ENCODE measurements at regions of chr14 and their contacts with region 1.

Region 1: GRCh38 chr14:100067971-100068959 is 3.0 kb downstream of the EVL start:
- DNase-seq: peak; percentile 95
- ATAC-seq: peak; percentile 67
- H3K4me3 Mint-ChIP-seq: peak overlapping the region; percentile 91
- H3K27ac Mint-ChIP-seq: peak overlapping the region; percentile 97
- H3K4me1 Mint-ChIP-seq: peaks cover 36% of the 10 kb centered on the region
- H3K27me3 Mint-ChIP-seq: no peaks in the 10 kb centered on the region

Region 2: GRCh38 chr14:100049220-100049619 is 19.0 kb before region 1 on chr14:
- CTCF ChIA-PET with region 1: interaction called, 160 read pairs
- POLR2A ChIA-PET with region 1: interaction called, 22 read pairs
- DNase-seq: no peak
- ATAC-seq: peak; percentile 28
- H3K4me3 Mint-ChIP-seq: no peak overlapping the region
- H3K27ac Mint-ChIP-seq: peak overlapping the region; percentile 1
- H3K4me1 Mint-ChIP-seq: peaks cover 34% of the 10 kb centered on the region
- H3K27me3 Mint-ChIP-seq: no peaks in the 10 kb centered on the region

Region 3: DNA sequence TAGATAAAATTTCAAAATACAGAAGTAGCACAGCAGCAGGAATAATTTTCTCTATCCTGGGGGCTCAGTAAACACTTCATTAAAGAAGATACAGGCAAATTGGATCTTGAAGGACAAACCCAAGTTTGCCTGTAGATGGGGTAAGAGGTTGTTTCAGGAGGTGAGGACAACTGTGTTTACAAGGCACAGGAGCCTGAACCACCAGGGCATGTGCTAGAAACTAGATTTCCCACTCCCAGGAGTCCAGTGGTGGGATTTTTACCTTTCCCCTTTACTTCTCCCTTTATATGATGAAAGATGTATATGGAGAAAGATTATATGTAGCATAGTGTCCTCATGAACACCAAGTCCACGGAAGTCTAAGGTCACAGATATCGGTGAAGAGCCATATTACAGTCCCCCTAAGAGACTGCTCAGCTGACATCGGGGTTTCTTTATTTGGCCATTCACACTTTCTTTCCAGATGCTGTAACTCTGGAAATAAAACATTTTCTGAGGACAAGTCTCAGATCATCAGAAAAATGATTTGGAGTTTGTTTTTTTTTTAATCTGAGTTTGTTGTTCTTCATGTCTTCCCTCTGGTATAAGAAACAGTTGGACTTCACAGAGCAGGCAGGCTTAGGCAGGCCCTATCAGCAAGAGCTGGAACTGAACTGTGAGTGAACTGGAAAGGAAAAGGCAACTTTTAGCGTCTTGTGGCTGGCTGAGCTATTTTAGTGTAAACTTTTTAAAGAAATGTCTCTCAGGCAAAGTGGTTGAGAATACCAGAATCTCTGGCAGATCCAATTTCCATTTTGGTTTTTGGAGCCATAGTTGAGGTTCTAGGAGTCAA is 11.1 kb before region 1 on chr14:
- CTCF ChIA-PET with region 1: interaction called, 160 read pairs
- POLR2A ChIA-PET with region 1: interaction called, 21 read pairs
- DNase-seq: peak; percentile 40
- ATAC-seq: peak; percentile 55
- H3K4me3 Mint-ChIP-seq: no peak overlapping the region
- H3K27ac Mint-ChIP-seq: peak overlapping the region; percentile 74
- H3K4me1 Mint-ChIP-seq: peaks cover 70% of the 10 kb centered on the region
- H3K27me3 Mint-ChIP-seq: no peaks in the 10 kb centered on the region

Region 4: GRCh38 chr14:100091386-100091785 is 23.1 kb after region 1 on chr14:
- CTCF ChIA-PET with region 1: interaction called, 237 read pairs
- POLR2A ChIA-PET with region 1: interaction called, 6 read pairs
- DNase-seq: no peak
- ATAC-seq: no peak
- H3K4me3 Mint-ChIP-seq: no peak overlapping the region
- H3K27ac Mint-ChIP-seq: peak overlapping the region; percentile 13
- H3K4me1 Mint-ChIP-seq: peaks cover 90% of the 10 kb centered on the region
- H3K27me3 Mint-ChIP-seq: no peaks in the 10 kb centered on the region

Measured in activated CD8-positive, alpha-beta T cell treated with anti-CD3 and anti-CD28 coated beads, Interleukin-2, amount 10 ng/mL, durations not matched to agents 7 days and 5 days (primary cell).